ENCODE measurements at regions of chr11 and their contacts with region 1.

Region 1: GRCh38 chr11:6603287-6604080 is at the starts of genes ILK and RRP8:
- DNase-seq: peak; percentile 93 to 96
- H3K4me3 ChIP-seq: peak within 1 kb of the TSS; percentile 62 to 85
- H3K27ac ChIP-seq: peak within 1 kb of the TSS; percentile 87
- H3K4me1 ChIP-seq: peaks cover 61% of the 10 kb centered on the region
- H3K27me3 ChIP-seq: no peaks in the 10 kb centered on the region
- CTCF ChIP-seq: no peak
- POLR2A ChIP-seq: peak in 1 of 2 donors; percentile 91
- total RNA-seq, gene ILK: 149 TPM
- total RNA-seq, gene RRP8: 10.3 TPM

Region 2: DNA sequence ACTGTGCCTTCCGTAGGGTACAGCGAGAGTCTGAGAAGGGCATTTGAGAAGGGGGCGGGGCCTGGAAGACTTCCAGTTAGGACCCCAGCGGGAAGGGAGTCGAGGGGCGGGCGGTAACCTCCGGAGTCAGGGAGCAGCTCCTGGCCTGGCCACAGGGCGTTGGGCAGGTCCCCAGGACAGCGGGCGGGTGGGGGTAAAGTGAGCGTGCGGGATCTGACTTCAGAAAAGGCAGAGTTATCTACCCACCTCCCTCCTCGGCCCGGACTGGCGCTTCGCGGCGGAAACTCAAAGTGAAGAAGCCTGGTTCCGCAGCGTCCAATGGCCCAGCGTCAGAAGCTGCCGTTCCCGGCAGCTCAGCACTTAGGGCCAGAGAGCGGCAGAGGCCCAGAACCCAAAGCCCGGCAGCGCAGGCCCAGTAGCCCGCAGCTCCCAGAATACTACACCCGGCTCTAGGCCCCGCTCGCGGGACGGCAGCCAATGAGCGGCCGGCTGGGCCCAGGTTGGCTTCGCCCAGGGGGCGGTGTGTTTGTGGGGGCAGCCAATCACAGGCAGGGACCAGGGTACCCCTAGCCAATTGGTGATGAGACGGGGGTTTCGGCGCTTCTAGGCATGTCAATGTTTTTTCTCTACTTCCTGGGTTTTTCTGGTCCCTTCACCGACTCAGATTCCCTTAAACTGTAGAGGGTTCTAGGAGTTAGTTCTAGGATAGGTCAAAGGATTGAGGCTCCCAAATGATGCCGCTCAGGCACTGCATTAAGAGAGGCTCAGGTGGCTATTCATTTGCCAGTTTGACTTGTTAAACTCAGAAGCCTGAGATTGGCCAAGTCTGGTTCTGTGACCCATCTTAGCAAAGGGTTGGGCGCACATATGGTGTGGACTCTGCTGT is 1995.5 kb before region 1 on chr11 and contains the start of gene TRIM68:
- intact Hi-C with region 1: no loop called
- DNase-seq: peak in 1 of 2 donors; percentile 98
- H3K4me3 ChIP-seq: peak within 1 kb of the TSS; percentile 65 to 73
- H3K27ac ChIP-seq: peak within 1 kb of the TSS; percentile 80
- H3K4me1 ChIP-seq: peaks cover 20% of the 10 kb centered on the region
- H3K27me3 ChIP-seq: no peaks in the 10 kb centered on the region
- CTCF ChIP-seq: no peak
- POLR2A ChIP-seq: peak in 1 of 2 donors; percentile 52
- total RNA-seq, gene TRIM68: 9.6 TPM

Region 3: GRCh38 chr11:6655020-6655789 is 51.7 kb after region 1 on chr11:
- intact Hi-C with region 1: loop called (anchors 10 kb)
- DNase-seq: no peak
- H3K4me3 ChIP-seq: peak overlapping the region; percentile 57 to 72
- H3K27ac ChIP-seq: peak overlapping the region; percentile 92
- H3K4me1 ChIP-seq: peaks cover 17% of the 10 kb centered on the region
- H3K27me3 ChIP-seq: no peaks in the 10 kb centered on the region
- CTCF ChIP-seq: no peak
- POLR2A ChIP-seq: no peak

Region 4: DNA sequence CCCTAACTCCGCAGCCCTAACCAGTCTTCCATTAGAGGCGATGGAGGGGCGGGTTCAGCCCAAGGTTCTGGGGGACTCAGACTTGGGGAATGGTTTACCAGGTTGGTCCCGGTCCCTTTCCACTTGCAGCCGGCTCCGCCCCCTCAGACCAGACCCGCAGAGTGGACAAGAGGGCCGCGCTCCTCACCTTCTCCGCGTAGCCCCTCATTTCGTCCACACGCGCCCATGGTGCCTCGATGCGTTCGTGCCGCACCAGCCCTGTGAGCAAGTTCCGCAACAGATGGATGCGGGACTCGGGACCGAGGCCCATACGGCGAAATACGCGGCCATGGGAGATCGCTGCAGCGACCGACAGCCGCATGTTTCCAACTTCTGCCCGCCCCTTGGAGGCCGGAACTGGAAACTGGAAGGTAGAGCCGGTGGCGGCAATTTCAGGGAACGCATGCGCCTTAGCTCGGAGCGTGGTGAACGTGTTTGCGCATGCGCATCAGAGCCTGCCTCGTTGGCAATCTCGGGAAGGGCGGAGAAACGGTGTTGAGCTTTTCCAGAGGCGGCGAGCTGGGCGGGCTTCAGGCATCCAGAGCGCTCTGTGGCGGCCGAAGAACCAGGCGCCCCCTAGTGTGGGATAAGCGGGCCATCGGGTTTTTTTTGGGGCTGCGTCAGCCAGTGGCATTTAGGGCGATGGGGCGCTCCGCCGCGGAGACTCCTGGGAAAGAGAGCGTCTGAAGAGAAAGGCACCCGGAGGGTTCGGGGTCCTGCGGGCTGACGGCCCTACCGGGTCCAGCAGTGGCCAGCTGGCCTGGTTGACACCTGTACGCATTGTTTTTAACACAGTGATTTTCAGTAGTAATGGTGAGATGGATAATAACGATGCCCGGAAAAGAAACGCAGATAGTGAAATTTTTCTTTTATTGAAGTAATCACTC is 79.7 kb after region 1 on chr11 and contains the start of gene MRPL17:
- intact Hi-C with region 1: loop called (anchors 5 kb)
- DNase-seq: peak; percentile 98 to 99
- H3K4me3 ChIP-seq: peak within 1 kb of the TSS; percentile 77 to 78
- H3K27ac ChIP-seq: peak within 1 kb of the TSS; percentile 94
- H3K4me1 ChIP-seq: peaks cover 24% of the 10 kb centered on the region
- H3K27me3 ChIP-seq: no peaks in the 10 kb centered on the region
- CTCF ChIP-seq: peak; percentile 87 to 93 (median 92)
- POLR2A ChIP-seq: peak in 1 of 2 donors; percentile 52
- total RNA-seq, gene MRPL17: 55.2 TPM

Region 5: GRCh38 chr11:6693342-6694228 is 90.1 kb after region 1 on chr11:
- intact Hi-C with region 1: no loop called
- DNase-seq: no peak
- H3K4me3 ChIP-seq: no peak overlapping the region
- H3K27ac ChIP-seq: no peak overlapping the region
- H3K4me1 ChIP-seq: peaks cover 27% of the 10 kb centered on the region
- H3K27me3 ChIP-seq: no peaks in the 10 kb centered on the region
- CTCF ChIP-seq: no peak
- POLR2A ChIP-seq: no peak

Measured in vagina (tissue), 2 donors.